ENCODE measurements at regions of chr7 and their contacts with region 1.

Region 1: DNA sequence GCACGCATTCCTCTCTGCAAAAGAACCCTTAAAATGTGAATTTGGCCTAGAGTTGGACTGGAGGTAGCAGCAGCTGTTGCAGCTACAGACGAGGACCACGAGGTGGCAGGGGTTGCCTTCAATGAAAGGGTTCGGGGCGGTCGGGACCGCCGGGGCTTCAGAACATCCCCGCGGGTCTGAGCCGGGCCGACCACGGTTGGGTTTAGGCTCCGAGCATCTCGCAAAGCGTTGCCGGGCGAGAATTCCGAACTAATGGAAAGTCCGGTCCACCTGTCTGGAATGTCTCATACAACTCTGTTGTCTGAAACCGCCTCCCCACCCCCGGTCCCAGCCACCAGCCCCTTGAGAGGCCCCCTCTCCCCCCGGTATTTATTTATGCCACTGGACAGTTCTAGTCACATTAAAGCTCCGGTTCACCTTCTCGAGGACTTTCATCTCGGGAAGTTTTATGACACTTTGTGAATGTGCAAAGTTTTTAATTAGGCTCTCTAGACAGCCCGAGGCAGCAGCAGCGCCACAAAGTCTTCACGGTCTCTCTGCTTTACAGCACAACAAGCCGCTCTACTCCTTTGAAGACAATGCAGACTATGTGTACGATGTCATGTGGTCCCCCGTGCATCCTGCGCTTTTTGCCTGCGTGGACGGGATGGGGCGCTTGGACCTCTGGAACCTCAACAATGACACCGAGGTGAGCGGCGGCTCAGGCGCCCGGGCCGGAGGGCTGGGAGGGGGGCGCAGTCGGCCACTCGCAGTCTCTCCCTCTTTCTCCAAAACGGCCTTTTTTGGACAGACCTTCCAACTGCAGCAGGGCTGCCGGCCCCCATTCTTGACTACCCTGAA is 246.2 kb downstream of the SLC25A13 start:
- DNase-seq: peak; percentile 10 to 66 (median 45)
- ATAC-seq: peak; percentile 73
- H3K4me3 ChIP-seq: peak overlapping the region; percentile 43 to 60
- H3K4me3 Mint-ChIP-seq: peak overlapping the region; percentile 86
- H3K27ac ChIP-seq: no peak overlapping the region
- H3K27ac Mint-ChIP-seq: no peak overlapping the region
- H3K4me1 ChIP-seq: peaks cover 9% of the 10 kb centered on the region
- H3K4me1 Mint-ChIP-seq: peaks cover 10% of the 10 kb centered on the region
- H3K27me3 ChIP-seq: peaks cover 5 to 9% of the 10 kb centered on the region in 2 experiments
- H3K27me3 Mint-ChIP-seq: peaks cover 38% of the 10 kb centered on the region
- CTCF ChIP-seq: peak; percentile 74

Region 2: GRCh38 chr7:96887426-96887825 is 811.7 kb after region 1 on chr7:
- CTCF ChIA-PET with region 1: no interaction called
- POLR2A ChIA-PET with region 1: no interaction called
- intact Hi-C with region 1: loop called in 1 of 2 experiments (anchors 10 kb)
- DNase-seq: no peak
- ATAC-seq: no peak
- H3K4me3 ChIP-seq: no peak overlapping the region
- H3K4me3 Mint-ChIP-seq: no peak overlapping the region
- H3K27ac ChIP-seq: no peak overlapping the region
- H3K27ac Mint-ChIP-seq: no peak overlapping the region
- H3K4me1 ChIP-seq: no peaks in the 10 kb centered on the region
- H3K4me1 Mint-ChIP-seq: no peaks in the 10 kb centered on the region
- H3K27me3 ChIP-seq: no peaks in the 10 kb centered on the region
- H3K27me3 Mint-ChIP-seq: peaks cover 7% of the 10 kb centered on the region
- CTCF ChIP-seq: no peak

Region 3: GRCh38 chr7:97064967-97065587 is 989.3 kb after region 1 on chr7:
- CTCF ChIA-PET with region 1: interaction called, 3 read pairs
- POLR2A ChIA-PET with region 1: no interaction called
- intact Hi-C with region 1: loop called in 1 of 2 experiments (anchors 1 kb)
- DNase-seq: peak in 4 of 9 experiments; percentile 12 to 66 (median 38)
- ATAC-seq: no peak
- H3K4me3 ChIP-seq: no peak overlapping the region
- H3K4me3 Mint-ChIP-seq: no peak overlapping the region
- H3K27ac ChIP-seq: no peak overlapping the region
- H3K27ac Mint-ChIP-seq: no peak overlapping the region
- H3K4me1 ChIP-seq: no peaks in the 10 kb centered on the region
- H3K4me1 Mint-ChIP-seq: no peaks in the 10 kb centered on the region
- H3K27me3 ChIP-seq: no peaks in the 10 kb centered on the region
- H3K27me3 Mint-ChIP-seq: peaks cover 8% of the 10 kb centered on the region
- CTCF ChIP-seq: peak; percentile 75

Region 4: GRCh38 chr7:97179454-97180104 is 1103.8 kb after region 1 on chr7:
- CTCF ChIA-PET with region 1: no interaction called
- POLR2A ChIA-PET with region 1: no interaction called
- intact Hi-C with region 1: loop called (anchors 2 to 5 kb)
- DNase-seq: peak; percentile 6 to 71 (median 41)
- ATAC-seq: peak; percentile 69
- H3K4me3 ChIP-seq: no peak overlapping the region
- H3K4me3 Mint-ChIP-seq: no peak overlapping the region
- H3K27ac ChIP-seq: no peak overlapping the region
- H3K27ac Mint-ChIP-seq: no peak overlapping the region
- H3K4me1 ChIP-seq: no peaks in the 10 kb centered on the region
- H3K4me1 Mint-ChIP-seq: no peaks in the 10 kb centered on the region
- H3K27me3 ChIP-seq: no peaks in the 10 kb centered on the region
- H3K27me3 Mint-ChIP-seq: no peaks in the 10 kb centered on the region
- CTCF ChIP-seq: peak; percentile 80

Region 5: GRCh38 chr7:98014352-98014751 is 1938.6 kb after region 1 on chr7:
- CTCF ChIA-PET with region 1: no interaction called
- POLR2A ChIA-PET with region 1: no interaction called
- intact Hi-C with region 1: loop called in 1 of 2 experiments (anchors 5 kb)
- DNase-seq: no peak
- ATAC-seq: no peak
- H3K4me3 ChIP-seq: no peak overlapping the region
- H3K4me3 Mint-ChIP-seq: no peak overlapping the region
- H3K27ac ChIP-seq: no peak overlapping the region
- H3K27ac Mint-ChIP-seq: no peak overlapping the region
- H3K4me1 ChIP-seq: no peaks in the 10 kb centered on the region
- H3K4me1 Mint-ChIP-seq: no peaks in the 10 kb centered on the region
- H3K27me3 ChIP-seq: no peaks in the 10 kb centered on the region
- H3K27me3 Mint-ChIP-seq: peaks cover 17% of the 10 kb centered on the region
- CTCF ChIP-seq: no peak